Left colon (tissue), 2 donors: ENCODE measurements at regions of chr17 and their contacts with region 1.

Region 1: GRCh38 chr17:13973960-13974651 is 95.2 kb upstream of the COX10 start:
- DNase-seq: no peak
- ATAC-seq: no peak

Region 2: DNA sequence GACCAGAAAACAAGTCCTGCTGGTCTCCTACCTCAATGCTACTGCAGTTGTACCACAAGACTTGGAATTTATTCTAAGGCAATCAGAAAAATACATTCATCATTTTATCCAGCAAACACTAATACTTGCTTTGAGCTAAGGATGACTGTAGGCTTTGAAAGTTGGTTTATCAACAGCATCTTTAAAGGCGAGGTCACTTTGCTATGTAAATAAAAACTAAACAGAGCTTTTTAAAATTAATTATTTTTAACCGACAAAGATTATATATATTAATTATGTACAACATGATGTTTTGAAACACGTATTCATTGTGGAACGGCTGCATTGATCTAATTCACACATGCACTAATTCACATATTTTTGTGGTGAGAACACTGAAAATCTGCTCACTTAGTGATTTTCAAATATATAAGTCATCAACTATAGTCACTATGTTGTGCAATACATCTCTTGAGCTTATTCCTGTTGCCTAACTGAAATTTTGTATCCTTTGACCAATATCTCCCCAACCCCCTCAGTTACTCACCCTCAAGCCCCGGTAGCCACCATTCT is 246.5 kb before region 1 on chr17:
- intact Hi-C with region 1: loop called in 1 of 2 experiments (anchors 10 kb)
- DNase-seq: no peak
- ATAC-seq: no peak